Ascending aorta (tissue), 2 donors: ENCODE measurements at regions of chr6 and their contacts with region 1.

Region 1: DNA sequence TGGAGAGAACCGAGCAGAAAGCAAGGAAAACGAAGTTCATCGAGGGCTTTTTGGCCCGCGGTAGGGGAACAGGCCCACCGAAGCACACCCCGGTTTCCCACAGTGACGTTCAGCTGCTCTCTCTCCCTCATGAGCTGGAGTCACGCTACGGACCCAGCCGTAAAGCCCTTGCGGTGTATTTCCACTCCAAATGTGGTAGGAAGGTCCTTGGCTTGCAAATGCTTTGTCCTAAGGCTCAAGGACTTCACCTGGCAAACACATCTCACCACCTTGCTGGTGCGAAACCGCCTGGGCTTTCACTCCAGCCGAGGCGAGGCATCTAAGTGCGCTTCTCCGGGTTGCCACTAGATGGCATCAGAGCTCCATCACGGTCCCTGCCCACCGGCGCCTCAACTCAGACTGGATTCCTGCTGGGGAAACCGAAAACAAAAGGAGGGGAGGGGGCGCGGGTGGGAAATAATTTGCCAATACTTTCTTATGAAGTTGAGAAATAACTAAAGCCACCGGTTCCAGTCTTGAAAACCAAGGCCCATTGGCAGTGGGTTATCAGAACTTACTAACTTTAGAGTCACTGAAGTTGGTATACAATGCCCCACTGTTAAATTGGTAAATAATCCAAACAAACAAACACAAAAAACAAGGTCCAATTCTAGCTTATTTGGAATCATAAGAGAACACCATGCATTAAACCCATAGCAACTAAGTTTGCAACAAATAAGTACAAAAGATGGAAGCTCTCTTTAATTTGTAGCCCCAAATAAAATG is 13.4 kb upstream of the FOXC1 start:
- DNase-seq: no peak
- H3K4me3 ChIP-seq: peak overlapping the region; percentile 27 to 60
- H3K27ac ChIP-seq: no peak overlapping the region
- H3K4me1 ChIP-seq: no peaks in the 10 kb centered on the region
- H3K27me3 ChIP-seq: no peaks in the 10 kb centered on the region
- CTCF ChIP-seq: peak; percentile 92 to 98 (median 97)

Region 2: GRCh38 chr6:474453-475185 is 1121.7 kb before region 1 on chr6:
- intact Hi-C with region 1: no loop called
- DNase-seq: no peak
- H3K4me3 ChIP-seq: no peak overlapping the region
- H3K27ac ChIP-seq: no peak overlapping the region
- H3K4me1 ChIP-seq: no peaks in the 10 kb centered on the region
- H3K27me3 ChIP-seq: no peaks in the 10 kb centered on the region
- CTCF ChIP-seq: no peak

Region 3: GRCh38 chr6:1724616-1725015 is 128.3 kb after region 1 on chr6:
- intact Hi-C with region 1: no loop called
- DNase-seq: no peak
- H3K4me3 ChIP-seq: no peak overlapping the region
- H3K27ac ChIP-seq: no peak overlapping the region
- H3K4me1 ChIP-seq: peaks cover 0 to 5% of the 10 kb centered on the region in 2 donors
- H3K27me3 ChIP-seq: no peaks in the 10 kb centered on the region
- CTCF ChIP-seq: no peak

Region 4: GRCh38 chr6:2396846-2397630 is 800.8 kb after region 1 on chr6:
- intact Hi-C with region 1: loop called (anchors 5 kb)
- DNase-seq: no peak
- H3K4me3 ChIP-seq: no peak overlapping the region
- H3K27ac ChIP-seq: peak overlapping the region in 1 of 2 donors; percentile 12
- H3K4me1 ChIP-seq: peaks cover 0 to 8% of the 10 kb centered on the region in 2 donors
- H3K27me3 ChIP-seq: no peaks in the 10 kb centered on the region
- CTCF ChIP-seq: no peak

Region 5: DNA sequence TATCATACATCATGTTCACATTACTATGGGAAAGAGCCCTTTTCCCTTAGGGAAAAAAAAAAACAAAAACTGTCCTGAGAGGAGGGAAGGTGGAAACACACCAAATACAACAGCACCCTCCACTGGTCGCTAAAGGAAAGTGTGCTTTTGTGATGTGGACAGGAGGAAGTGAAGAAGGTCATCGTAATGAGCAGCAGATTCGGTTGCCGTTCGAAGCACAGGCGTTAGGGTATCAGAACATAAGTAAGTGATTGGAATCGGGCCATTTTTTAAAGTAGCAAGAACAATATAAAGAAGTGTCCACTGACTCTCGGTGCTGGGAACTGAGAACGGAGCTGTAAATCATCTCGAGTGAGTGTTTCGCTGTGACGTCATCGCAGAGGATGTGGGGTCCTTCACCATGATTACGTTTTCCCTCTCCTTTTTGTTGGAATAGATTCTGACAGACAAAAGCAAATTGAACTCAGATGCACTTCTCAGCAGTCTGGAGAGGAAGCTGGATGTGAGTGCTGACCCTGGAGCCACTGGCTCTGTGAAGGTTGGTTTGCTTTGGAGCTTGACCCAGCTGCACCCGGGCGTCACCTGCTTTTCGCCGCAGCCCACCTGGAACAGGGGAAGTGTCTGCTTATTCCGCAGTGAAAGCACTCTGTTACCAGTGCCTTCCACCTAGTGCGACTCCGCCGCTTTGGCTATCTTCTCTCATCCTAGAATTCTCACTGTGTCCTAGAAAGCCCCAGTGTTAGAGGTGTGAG is 852.7 kb after region 1 on chr6:
- intact Hi-C with region 1: loop called (anchors 1 kb)
- DNase-seq: peak in 1 of 2 donors; percentile 76
- H3K4me3 ChIP-seq: peak overlapping the region; percentile 42 to 62
- H3K27ac ChIP-seq: peak overlapping the region; percentile 56 to 59
- H3K4me1 ChIP-seq: peaks cover 3 to 11% of the 10 kb centered on the region in 2 donors
- H3K27me3 ChIP-seq: no peaks in the 10 kb centered on the region
- CTCF ChIP-seq: peak; percentile 45 to 84 (median 76)

Region 6: DNA sequence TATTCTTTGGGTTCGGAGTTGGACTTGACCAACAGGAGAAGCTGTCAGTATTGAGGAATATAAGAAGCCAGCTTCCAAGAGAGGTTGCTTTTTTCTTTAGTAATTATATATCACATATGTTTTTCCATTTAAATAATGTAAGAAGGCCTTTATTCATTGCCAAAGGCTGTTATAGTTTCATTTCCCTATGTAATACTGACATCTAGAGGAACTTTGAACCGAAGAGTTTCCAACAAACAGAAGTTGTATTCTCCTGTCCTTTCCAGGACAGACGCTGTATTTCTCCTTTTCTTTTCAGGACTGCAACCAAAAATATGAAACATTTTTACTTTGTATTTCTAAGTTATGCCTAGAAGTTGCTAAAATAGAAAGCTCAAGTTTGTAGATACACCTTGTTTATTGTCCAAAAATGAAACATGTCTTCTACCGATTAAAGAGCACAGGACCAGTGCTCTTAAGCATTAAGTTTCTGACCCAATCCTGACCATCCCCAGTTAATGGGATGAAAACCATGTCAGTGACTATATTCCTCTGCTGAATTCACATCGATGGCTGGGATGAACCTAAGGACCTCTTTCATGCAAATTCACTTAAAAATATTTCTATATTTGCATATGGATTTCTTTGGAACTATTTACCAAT is 1099.3 kb after region 1 on chr6:
- intact Hi-C with region 1: loop called (anchors 1 kb)
- DNase-seq: no peak
- H3K4me3 ChIP-seq: no peak overlapping the region
- H3K27ac ChIP-seq: no peak overlapping the region
- H3K4me1 ChIP-seq: no peaks in the 10 kb centered on the region
- H3K27me3 ChIP-seq: no peaks in the 10 kb centered on the region
- CTCF ChIP-seq: peak; percentile 30 to 60 (median 46)

Region 7: GRCh38 chr6:2749969-2750600 is 1153.8 kb after region 1 on chr6:
- intact Hi-C with region 1: loop called (anchors 1 kb)
- DNase-seq: peak in 1 of 2 donors; percentile 77
- H3K4me3 ChIP-seq: peak overlapping the region; percentile 21 to 47
- H3K27ac ChIP-seq: no peak overlapping the region
- H3K4me1 ChIP-seq: peaks cover 0 to 5% of the 10 kb centered on the region in 2 donors
- H3K27me3 ChIP-seq: no peaks in the 10 kb centered on the region
- CTCF ChIP-seq: peak; percentile 67 to 83 (median 75)

Region 8: DNA sequence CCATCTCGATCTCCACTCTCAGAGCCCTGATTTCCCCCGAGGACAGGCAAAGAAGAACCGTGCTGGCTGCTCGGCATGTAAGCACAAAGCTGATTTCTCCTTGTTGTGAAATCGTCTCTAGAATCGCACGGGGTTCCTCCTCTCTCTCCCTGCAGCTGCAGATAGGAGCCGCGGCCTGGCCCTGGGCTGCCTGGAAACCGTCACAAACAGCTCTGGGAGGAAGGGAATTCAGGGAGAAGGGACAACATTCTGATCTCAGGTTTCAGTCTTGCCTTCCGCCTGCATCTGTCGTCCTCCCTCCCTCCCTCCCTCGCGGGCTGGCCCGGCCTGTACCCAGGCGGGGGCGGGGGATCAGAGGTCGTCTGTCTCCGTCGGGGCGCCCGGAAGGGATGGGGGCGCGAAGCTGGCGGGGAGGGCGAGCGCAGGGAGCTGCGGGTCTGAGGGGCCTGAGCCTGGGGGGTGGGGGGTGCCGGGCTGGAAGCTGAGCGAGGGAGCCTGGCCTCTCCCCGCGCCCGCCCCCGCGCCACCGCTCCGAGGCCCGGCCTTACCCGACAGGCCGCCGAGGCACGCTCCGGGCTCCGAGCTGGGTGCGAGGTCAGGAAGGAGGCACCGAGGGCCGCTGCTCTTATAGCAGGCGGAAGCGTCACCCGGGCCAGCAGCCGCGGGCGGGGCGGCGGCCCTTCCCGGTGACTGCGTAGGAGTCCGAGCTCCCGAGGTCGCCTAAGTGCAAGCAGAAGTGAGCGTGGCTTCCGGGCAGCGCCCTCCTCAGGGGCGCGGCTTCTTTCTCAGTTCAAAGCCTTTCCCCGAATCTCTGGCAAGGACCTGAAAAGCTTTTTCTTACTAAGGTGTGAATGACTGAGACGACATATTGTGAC is 1245.2 kb after region 1 on chr6 and contains the start of gene SERPINB1:
- intact Hi-C with region 1: loop called (anchors 10 kb)
- DNase-seq: peak; percentile 75 to 97
- H3K4me3 ChIP-seq: peak within 1 kb of the TSS; percentile 74 to 87
- H3K27ac ChIP-seq: peak within 1 kb of the TSS; percentile 97 to 99
- H3K4me1 ChIP-seq: peaks cover 10 to 16% of the 10 kb centered on the region in 2 donors
- H3K27me3 ChIP-seq: no peaks in the 10 kb centered on the region
- CTCF ChIP-seq: peak in 1 of 3 experiments; percentile 20
- total RNA-seq, gene SERPINB1: 14.0 TPM